Naive thymus-derived CD4-positive, alpha-beta T cell (primary cell): ENCODE measurements at regions of chr3 and their contacts with region 1.

Region 1: GRCh38 chr3:139935016-139935865 is at the start of gene CLSTN2:
- DNase-seq: peak in 1 of 9 donors; percentile 33
- ATAC-seq: peak; percentile 36
- H3K4me3 ChIP-seq: no peak within 1 kb of the TSS
- H3K4me3 Mint-ChIP-seq: peak within 1 kb of the TSS in 2 of 10 donors; percentile 38 to 41
- H3K27ac ChIP-seq: no peak within 1 kb of the TSS
- H3K27ac Mint-ChIP-seq: no peak within 1 kb of the TSS
- H3K4me1 ChIP-seq: no peaks in the 10 kb centered on the region
- H3K4me1 Mint-ChIP-seq: peaks cover 0 to 11% (median 3%) of the 10 kb centered on the region in 7 donors
- H3K27me3 ChIP-seq: no peaks in the 10 kb centered on the region
- H3K27me3 Mint-ChIP-seq: peaks cover 47 to 69% (median 56%) of the 10 kb centered on the region in 5 donors
- total RNA-seq, gene CLSTN2: 0.02 TPM in 1 of 5 experiments, not detected in the others

Region 2: GRCh38 chr3:139689122-139689521 is 246.1 kb before region 1 on chr3:
- CTCF ChIA-PET with region 1: no interaction called
- POLR2A ChIA-PET with region 1: no interaction called
- intact Hi-C with region 1: no loop called
- DNase-seq: no peak
- ATAC-seq: no peak
- H3K4me3 ChIP-seq: no peak overlapping the region
- H3K4me3 Mint-ChIP-seq: no peak overlapping the region
- H3K27ac ChIP-seq: no peak overlapping the region
- H3K27ac Mint-ChIP-seq: no peak overlapping the region
- H3K4me1 ChIP-seq: no peaks in the 10 kb centered on the region
- H3K4me1 Mint-ChIP-seq: no peaks in the 10 kb centered on the region
- H3K27me3 ChIP-seq: no peaks in the 10 kb centered on the region
- H3K27me3 Mint-ChIP-seq: peaks cover 6 to 18% (median 11%) of the 10 kb centered on the region in 5 donors

Region 3: DNA sequence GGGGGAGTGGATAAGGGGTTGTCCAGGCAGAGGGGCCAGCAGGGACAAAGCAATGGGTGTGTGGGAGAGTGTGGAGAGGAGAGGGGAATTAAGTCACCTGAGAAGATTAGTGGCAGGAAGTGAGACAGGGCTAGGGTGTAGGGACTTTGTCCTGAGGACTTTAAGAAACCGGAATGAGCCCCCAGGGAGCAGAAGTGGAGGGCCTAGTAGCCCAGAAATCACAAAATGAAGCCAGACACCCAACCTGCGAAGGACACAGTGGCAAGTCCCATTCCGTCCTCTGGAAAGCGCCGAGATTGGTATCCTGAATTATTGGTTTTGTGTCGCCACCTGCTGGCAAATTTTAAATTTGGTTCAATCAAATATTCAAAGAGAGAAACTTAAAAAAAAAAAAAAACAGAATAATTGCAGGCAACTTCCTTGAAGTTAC is 928.4 kb after region 1 on chr3:
- CTCF ChIA-PET with region 1: no interaction called
- POLR2A ChIA-PET with region 1: no interaction called
- intact Hi-C with region 1: loop called in 1 of 2 experiments (anchors 2 kb)
- DNase-seq: peak in 7 of 9 donors; percentile 5 to 56 (median 33)
- ATAC-seq: no peak
- H3K4me3 ChIP-seq: no peak overlapping the region
- H3K4me3 Mint-ChIP-seq: no peak overlapping the region
- H3K27ac ChIP-seq: no peak overlapping the region
- H3K27ac Mint-ChIP-seq: no peak overlapping the region
- H3K4me1 ChIP-seq: no peaks in the 10 kb centered on the region
- H3K4me1 Mint-ChIP-seq: peaks cover 0 to 4% (median 0%) of the 10 kb centered on the region in 7 donors
- H3K27me3 ChIP-seq: no peaks in the 10 kb centered on the region
- H3K27me3 Mint-ChIP-seq: peaks cover 6 to 18% (median 11%) of the 10 kb centered on the region in 5 donors